Sciatic nerve (tissue), 2 donors: ENCODE measurements at regions of chr18 and their contacts with region 1.

Region 1: GRCh38 chr18:36481201-36481657 is 183.7 kb downstream of the FHOD3 start:
- DNase-seq: no peak
- ATAC-seq: no peak

Region 2: DNA sequence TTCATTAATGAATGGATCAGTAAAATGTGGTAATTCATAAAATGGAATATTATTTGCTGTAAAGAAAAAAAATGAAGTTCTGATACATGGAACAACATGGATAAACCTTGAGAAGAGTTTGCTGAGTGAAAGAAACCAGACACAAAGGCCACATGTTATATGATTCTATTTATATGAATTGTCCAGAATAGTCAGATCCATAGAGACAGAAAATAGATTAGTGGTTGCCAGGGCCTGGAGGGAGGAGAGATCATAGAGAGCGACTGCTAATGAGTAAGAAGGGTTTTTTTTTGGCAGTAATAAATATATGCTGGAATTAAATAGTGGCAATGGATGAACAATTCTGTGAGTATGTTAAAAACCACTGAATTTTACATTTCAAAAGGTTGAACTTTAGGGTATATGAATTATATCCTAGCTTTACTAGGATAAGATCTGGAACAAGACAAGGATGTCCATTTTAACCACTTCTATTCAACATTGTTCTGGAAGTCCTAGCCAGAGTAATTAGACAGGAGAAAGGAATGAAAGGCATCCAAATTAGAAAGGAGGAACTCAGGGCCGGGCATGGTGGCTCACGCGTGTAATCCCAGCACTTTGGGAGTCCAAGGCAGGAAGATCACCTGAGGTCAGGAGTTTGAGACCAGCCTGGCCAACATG is 1391.2 kb before region 1 on chr18:
- intact Hi-C with region 1: loop called (anchors 5 kb)
- DNase-seq: no peak
- ATAC-seq: no peak

Region 3: GRCh38 chr18:38307914-38308313 is 1826.7 kb after region 1 on chr18:
- intact Hi-C with region 1: loop called (anchors 5 kb)
- DNase-seq: no peak
- ATAC-seq: no peak